Esophagus muscularis mucosa (tissue), 4 donors: ENCODE measurements at regions of chr11 and their contacts with region 1.

Region 1: DNA sequence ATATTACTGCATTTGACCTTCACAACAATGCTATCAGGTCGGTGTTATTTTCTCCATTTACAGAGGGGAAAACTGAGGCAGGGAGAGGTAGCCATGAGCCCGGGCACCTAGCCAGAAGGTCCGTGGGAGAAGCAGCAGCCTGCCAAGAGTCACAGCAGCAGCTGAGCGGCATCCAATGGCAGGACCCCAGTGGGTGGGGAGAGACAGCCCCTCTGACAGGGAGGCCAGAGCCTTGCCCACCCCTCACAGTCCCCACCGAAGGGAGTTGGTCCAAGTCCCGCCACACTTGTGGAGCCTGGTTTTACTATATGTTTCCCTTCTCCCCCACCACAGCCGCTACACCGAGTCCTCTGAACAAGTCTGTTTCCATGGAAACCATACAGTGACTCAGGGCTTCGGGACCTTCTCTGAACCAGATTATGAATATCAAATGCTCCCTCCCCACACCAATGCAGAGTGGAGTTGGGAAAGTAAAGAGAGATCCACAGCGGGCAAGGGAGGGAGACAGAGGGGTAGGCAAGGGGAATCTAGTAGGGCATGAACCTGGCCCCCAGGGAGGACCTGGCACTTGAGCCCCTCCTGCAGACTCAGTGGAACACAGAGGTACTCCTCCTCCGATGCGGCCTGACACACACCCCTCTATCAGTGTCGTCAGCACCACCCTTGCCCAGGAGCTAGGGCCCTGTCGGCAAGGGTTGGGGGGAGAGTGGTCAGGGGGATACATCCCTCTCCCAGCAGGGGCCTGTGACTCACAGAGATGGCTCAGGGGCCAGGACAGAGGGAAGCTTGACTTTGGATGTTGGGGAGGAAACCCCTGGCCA is 2.5 kb downstream of the CHST1 start:
- DNase-seq: no peak
- H3K4me3 ChIP-seq: no peak overlapping the region
- H3K27ac ChIP-seq: no peak overlapping the region
- H3K4me1 ChIP-seq: peaks cover 39 to 62% (median 57%) of the 10 kb centered on the region in 4 donors
- H3K27me3 ChIP-seq: peaks cover 0 to 74% (median 36%) of the 10 kb centered on the region in 4 donors
- CTCF ChIP-seq: no peak
- EP300 ChIP-seq: no peak
- POLR2A ChIP-seq: no peak

Region 2: DNA sequence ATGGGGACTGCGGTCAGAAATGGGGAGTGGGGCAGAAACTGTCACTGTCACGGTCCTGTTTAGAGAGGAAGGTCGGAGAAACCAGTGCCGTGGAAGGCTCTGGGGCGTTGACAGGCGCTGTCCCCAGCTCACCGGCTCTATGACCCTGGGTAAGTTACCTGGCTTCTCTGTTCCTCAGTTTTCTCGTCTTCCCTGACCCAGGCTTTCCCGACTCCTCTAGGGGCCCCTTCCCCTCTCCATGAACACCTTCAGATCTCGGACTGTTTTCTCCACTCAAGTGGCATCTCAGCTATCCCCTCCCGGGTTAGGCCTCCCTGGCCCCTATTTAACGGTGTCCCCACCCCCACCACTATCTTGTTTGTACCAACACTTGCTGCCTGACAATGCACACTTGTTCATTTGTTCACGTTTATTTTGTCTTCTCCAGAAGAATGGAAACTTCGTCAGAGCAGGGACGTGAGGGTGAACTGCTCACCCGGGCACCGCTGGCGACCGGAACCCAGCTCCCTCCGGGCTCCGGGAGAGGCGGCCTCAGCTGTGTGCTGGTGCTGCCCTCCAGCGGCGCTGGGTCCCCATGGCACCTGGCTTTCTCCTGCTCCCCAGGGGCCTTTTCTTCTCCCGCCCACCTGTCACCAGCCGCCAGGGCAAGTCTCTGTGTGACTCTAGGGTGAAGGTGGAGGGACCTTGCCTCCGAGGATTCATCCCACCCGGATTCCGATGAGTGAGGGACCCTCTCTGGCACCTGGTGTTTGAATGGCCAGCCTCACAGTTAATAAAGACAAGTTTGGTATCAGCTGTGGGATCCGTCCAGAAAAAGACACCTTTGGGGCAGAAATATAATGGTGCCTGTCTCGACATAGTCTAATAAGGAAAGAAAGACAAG is 108.9 kb after region 1 on chr11:
- intact Hi-C with region 1: loop called (anchors 5 kb)
- DNase-seq: peak; percentile 95
- H3K4me3 ChIP-seq: peak overlapping the region; percentile 58 to 65 (median 60)
- H3K27ac ChIP-seq: peak overlapping the region; percentile 60 to 77 (median 74)
- H3K4me1 ChIP-seq: peaks cover 4 to 14% (median 7%) of the 10 kb centered on the region in 4 donors
- H3K27me3 ChIP-seq: no peaks in the 10 kb centered on the region
- CTCF ChIP-seq: peak; percentile 92 to 94 (median 92)
- EP300 ChIP-seq: no peak
- POLR2A ChIP-seq: no peak